ENCODE measurements at regions of chr2 and their contacts with region 1.

Region 1: GRCh38 chr2:84495539-84496146 is 20.7 kb upstream of the DNAH6 start:
- DNase-seq: no peak
- ATAC-seq: peak; percentile 84

Region 2: GRCh38 chr2:84362541-84362940 is 133.1 kb before region 1 on chr2:
- intact Hi-C with region 1: no loop called
- DNase-seq: no peak
- ATAC-seq: no peak

Region 3: DNA sequence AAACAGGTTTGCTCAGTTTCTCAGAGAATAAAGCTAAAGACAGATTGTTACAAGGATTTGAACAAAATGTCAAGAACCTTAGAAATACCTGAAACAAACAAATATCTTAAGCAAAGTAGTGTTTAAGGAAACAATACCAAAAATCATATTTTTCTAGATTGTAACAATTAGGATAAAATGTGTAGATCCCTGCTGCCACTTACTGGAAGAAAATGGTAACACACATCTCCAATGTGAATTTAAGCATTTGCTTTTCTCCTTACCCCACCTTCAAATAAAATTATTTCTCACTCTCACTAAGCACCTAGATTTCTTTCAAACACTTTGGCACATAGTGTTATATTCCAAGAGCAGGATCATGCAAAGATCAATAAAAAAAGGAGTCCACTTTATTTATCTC is 71.5 kb before region 1 on chr2:
- intact Hi-C with region 1: no loop called
- DNase-seq: no peak
- ATAC-seq: no peak

Region 4: DNA sequence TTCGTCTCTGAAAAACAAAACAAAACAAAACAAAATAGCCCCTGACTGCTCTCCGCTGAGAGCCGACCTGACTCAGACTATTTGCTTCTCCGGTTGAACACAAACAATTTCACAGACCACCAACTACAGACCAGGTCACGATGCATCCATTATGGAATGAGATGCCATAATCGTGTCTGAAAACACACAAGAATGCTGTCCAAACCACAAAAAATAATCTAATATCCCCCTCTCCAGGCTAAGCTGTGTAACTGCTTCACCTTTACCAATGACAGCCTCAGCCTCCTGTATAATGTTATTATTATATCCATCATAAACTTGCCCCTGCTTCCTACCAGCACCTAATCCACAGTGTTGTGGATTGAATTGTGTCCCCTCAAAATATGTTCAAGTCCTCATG is 135.4 kb after region 1 on chr2:
- intact Hi-C with region 1: loop called (anchors 5 kb)
- DNase-seq: no peak
- ATAC-seq: no peak

Region 5: DNA sequence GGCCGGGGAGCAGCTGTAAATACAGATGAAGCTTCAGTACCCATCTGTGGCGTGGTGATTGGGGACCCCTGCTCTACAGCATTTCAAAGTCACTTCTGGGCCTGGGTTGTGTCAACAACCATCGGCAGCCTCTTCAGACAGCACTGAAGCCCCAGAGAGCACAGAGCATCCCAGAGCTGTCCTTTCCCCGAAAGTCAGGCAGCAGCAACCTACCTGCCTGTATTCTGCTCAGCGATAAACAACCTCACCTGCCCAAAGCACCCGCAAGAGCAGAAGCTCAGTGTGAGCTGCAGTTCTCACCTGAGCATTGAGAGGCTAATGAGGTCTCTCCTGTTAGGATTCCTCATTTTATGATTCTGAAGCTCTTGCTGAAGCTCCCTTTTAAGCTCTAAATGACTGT is 365.9 kb after region 1 on chr2:
- intact Hi-C with region 1: loop called (anchors 5 kb)
- DNase-seq: no peak
- ATAC-seq: no peak

Region 6: GRCh38 chr2:84881581-84882414 is 386.2 kb after region 1 on chr2:
- intact Hi-C with region 1: loop called (anchors 5 kb)
- DNase-seq: peak; percentile 84
- ATAC-seq: peak; percentile 91

Region 7: DNA sequence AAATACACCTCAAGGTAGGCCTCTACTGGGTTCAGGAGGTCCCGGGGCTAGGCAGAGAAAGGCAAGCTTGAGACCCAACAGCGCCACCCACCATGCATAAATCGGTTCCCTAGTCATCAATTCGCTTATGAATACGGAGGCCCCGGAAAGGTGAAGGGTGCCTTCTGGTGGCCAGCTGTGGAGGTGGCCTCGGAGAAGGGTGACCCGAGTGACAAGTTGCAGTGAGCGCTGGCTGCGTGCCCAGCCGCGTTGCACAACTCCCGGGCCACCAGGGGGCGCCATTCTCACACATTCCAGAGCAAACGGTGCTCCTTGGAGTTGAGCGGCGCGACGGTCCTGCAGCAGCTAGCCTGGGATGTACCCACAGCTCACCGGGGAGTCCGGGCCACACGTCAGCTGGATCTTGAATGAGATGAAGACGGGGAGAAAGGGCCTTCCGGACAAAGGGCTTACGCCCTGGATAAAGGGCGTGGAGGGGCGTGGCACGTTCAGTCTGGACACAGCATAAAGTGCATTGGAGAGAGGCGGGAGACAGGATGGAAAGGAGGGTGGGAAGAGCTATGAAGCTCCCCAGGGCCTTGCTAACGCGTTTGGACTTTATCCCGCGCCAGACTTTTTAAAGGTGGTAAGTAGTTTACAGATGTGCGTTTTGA is 430.2 kb after region 1 on chr2:
- intact Hi-C with region 1: loop called (anchors 5 kb)
- DNase-seq: peak; percentile 98
- ATAC-seq: peak; percentile 95